ENCODE measurements at regions of chr7 and their contacts with region 1.

Region 1: GRCh38 chr7:100088621-100089457 is at the start of gene COPS6:
- DNase-seq: no peak
- H3K4me3 ChIP-seq: peak within 1 kb of the TSS; percentile 89
- CTCF ChIP-seq: no peak

Region 2: GRCh38 chr7:100101016-100101862 is 12.4 kb after region 1 on chr7 and contains the starts of genes AP4M1 and MCM7:
- CTCF ChIA-PET with region 1: interaction called, 10 read pairs
- POLR2A ChIA-PET with region 1: interaction called, 14 read pairs
- DNase-seq: peak; percentile 87
- H3K4me3 ChIP-seq: peak within 1 kb of the TSS; percentile 83
- CTCF ChIP-seq: no peak

Measured in AG04449 (cell line).